Mammary epithelial cell (primary cell): ENCODE measurements at regions of chr5 and their contacts with region 1.

Region 1: DNA sequence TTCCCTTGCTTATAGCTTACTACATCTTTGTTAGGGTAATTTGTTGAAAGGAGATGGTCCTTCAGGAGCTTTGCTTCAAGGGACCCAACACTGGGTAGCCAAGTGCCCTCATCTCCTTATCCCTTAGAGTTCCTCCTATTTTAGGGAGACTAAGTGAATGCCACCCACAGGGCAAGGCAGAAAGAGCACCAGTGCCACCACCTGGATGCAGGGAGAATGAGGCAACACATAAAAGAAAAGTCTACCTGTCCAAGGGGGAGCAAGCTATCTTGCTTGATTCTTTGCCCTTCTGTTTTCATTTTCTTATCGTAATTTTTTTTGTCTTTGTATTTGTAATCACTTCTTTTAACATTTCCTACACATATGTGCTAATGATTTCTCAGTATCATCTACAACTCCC is 205.5 kb downstream of the NPR3 start:
- DNase-seq: peak; percentile 41
- H3K4me3 ChIP-seq: no peak overlapping the region
- H3K27ac ChIP-seq: no peak overlapping the region
- H3K4me1 ChIP-seq: no peaks in the 10 kb centered on the region
- H3K27me3 ChIP-seq: no peaks in the 10 kb centered on the region
- CTCF ChIP-seq: peak; percentile 51 to 88

Region 2: GRCh38 chr5:32489791-32490582 is 426.7 kb before region 1 on chr5:
- CTCF ChIA-PET with region 1: no interaction called
- dilution Hi-C with region 1: no loop called
- in situ Hi-C with region 1: no loop called
- intact Hi-C with region 1: loop called (anchors 2 kb)
- DNase-seq: peak; percentile 33
- H3K4me3 ChIP-seq: no peak overlapping the region
- H3K27ac ChIP-seq: no peak overlapping the region
- H3K4me1 ChIP-seq: no peaks in the 10 kb centered on the region
- H3K27me3 ChIP-seq: no peaks in the 10 kb centered on the region
- CTCF ChIP-seq: peak; percentile 67 to 72

Region 3: DNA sequence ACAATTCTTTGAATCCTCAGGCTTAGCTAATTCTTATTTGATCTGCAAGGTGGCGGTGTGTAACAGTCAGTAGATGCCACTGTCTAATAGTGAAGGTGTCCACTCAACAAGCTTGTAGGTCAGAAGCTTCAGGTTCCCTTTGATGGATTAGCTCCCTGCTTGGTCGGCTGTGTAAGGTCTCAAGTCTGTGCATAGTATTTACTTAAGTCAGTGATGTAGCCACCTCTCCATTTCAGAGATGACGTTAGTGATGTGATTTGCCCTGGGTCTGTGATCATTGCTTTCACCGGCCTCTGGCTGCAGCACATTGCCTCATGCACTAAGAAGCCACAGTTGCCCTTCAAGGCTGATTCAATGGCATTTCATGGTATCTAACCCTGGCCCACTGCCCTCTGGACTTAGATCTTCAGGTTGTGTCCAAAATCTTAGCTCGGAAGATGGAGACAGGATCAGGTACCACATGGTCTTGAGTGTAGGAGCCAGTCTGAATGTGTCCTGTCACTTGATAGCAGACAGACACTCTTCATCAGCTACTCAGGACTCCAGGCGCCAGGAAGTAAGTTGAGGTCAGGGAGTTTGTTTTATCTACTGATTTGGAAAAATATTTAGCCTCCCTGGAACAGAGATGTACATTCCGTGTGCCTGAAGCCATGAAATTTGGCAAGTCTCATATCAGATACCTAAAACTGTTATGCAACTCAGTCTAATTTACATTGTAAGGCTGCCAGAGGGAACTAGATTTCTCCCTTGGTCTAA is 288.4 kb before region 1 on chr5:
- CTCF ChIA-PET with region 1: interaction called, 4 read pairs
- dilution Hi-C with region 1: no loop called
- in situ Hi-C with region 1: no loop called
- intact Hi-C with region 1: loop called (anchors 5 kb)
- DNase-seq: no peak
- H3K4me3 ChIP-seq: no peak overlapping the region
- H3K27ac ChIP-seq: no peak overlapping the region
- H3K4me1 ChIP-seq: no peaks in the 10 kb centered on the region
- H3K27me3 ChIP-seq: no peaks in the 10 kb centered on the region
- CTCF ChIP-seq: peak in 1 of 2 donors; percentile 15

Region 4: GRCh38 chr5:32709781-32710549 is 206.7 kb before region 1 on chr5:
- CTCF ChIA-PET with region 1: no interaction called
- dilution Hi-C with region 1: no loop called
- in situ Hi-C with region 1: loop called in 1 of 2 experiments (anchors 25 kb)
- intact Hi-C with region 1: loop called (anchors 1 kb)
- DNase-seq: peak; percentile 62
- H3K4me3 ChIP-seq: peak overlapping the region; percentile 38 to 54 (median 52)
- H3K27ac ChIP-seq: no peak overlapping the region
- H3K4me1 ChIP-seq: peaks cover 31% of the 10 kb centered on the region
- H3K27me3 ChIP-seq: peaks cover 27% of the 10 kb centered on the region
- CTCF ChIP-seq: peak; percentile 49 to 71

Region 5: DNA sequence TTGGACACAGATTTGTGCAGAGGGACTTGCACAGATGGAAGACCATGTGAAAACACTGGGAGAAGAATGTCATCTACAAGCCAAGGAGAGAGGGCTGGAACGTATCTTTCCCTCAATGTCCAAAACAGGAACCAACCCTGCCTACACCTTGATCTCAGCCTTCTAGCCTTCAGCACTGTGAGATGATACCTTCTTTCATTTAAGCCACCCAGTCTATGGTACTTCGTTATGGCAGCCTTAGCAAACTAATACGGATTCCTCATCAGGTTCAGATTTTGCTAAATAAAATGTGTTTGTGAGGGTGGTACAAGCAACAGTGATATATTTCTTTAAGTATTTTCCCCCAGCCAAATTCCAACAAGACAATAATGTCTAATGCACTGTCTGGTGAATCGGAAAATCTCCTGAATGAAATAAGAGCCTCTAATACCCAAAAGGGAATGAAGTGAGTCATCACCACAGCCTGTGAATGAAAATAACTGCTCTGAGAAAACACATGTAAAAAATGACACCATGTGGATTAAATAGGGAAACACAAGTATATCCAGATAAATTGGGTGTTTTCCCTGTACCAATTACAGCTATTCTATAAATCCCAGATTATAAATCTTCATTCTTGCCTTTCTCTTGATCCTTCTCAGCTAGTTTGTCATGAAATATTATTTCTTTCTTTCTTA is 341.3 kb after region 1 on chr5:
- CTCF ChIA-PET with region 1: no interaction called
- dilution Hi-C with region 1: no loop called
- in situ Hi-C with region 1: no loop called
- intact Hi-C with region 1: loop called (anchors 2 kb)
- DNase-seq: peak; percentile 74
- H3K4me3 ChIP-seq: no peak overlapping the region
- H3K27ac ChIP-seq: no peak overlapping the region
- H3K4me1 ChIP-seq: peaks cover 9% of the 10 kb centered on the region
- H3K27me3 ChIP-seq: no peaks in the 10 kb centered on the region
- CTCF ChIP-seq: peak; percentile 15 to 18

Region 6: DNA sequence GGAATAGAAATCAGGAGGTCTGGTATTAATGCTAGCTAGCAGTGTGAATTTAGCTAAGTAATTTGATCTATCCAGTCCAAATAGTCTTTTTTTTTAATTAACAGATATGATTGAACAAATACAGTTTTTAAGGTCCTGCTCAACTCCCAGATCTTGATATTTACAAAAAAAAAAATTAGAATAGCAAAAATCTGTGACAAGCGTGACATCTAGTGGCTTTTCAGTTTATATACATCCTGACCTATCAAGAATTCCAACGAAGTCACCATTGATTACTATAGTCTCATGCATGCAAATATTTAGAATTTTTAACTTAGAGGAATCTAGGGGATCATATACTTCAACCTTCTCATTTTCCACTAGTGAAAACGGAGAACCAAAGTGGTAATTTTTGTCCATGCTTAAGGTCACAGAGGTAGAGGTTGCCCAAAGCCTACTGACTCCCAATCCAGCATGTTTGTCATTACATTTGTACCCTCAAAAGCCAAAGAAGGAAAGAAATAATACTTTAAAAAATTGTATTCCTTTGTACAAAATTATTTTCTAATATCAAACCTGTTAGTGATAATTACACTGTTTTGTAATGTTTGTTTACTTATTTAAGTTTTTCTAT is 506.5 kb after region 1 on chr5:
- CTCF ChIA-PET with region 1: no interaction called
- dilution Hi-C with region 1: no loop called
- in situ Hi-C with region 1: no loop called
- intact Hi-C with region 1: loop called (anchors 1 kb)
- DNase-seq: no peak
- H3K4me3 ChIP-seq: no peak overlapping the region
- H3K27ac ChIP-seq: no peak overlapping the region
- H3K4me1 ChIP-seq: no peaks in the 10 kb centered on the region
- H3K27me3 ChIP-seq: no peaks in the 10 kb centered on the region
- CTCF ChIP-seq: peak; percentile 27 to 51